CD4-positive, alpha-beta memory T cell (primary cell): ENCODE measurements at regions of chr9 and their contacts with region 1.

Region 1: DNA sequence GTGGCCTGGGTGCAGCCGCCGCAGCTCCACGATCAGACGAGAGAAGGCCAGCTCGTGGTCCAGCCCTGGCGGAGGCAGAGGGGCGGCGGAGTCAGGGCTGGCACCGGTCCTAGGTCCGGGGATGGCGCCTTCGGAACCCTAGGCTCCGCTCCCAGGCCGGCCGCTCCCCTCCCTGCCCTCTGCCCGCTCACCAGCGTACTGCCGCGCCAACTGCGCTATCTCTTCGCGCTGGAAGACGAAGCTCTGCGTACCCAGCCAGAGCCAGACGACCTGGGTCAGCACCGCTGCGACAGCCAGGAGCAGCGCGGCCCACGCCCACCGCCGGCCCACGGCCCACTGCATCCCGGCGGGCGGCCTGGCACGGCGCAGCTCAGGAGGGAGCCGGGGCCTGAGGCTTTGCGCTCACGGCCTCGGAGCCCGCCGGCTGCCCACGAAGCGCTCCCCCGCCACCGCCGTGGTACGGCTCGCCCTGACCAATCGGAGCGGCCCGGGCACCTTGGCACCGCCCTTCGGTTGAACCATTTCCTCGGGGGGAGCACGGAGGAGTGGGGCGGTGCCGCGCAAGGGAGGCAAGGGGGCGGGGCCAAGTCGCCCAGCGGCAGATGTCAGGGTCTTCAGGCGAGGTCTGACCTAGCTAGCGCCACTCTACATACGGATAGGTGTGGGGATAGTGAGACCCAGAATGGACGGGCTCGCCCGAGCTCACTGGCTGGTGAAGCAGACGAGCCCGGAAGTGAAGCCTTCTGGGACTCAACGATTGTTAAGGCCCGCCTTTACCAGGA is at the start of gene SIGMAR1:
- DNase-seq: peak; percentile 91 to 97 (median 94)
- H3K4me3 ChIP-seq: peak within 1 kb of the TSS; percentile 74 to 84
- H3K4me3 Mint-ChIP-seq: peak within 1 kb of the TSS; percentile 87 to 92 (median 91)
- H3K27ac ChIP-seq: peak within 1 kb of the TSS; percentile 78
- H3K27ac Mint-ChIP-seq: peak within 1 kb of the TSS; percentile 93 to 97 (median 95)
- H3K4me1 ChIP-seq: peaks cover 38% of the 10 kb centered on the region
- H3K4me1 Mint-ChIP-seq: peaks cover 22 to 51% (median 34%) of the 10 kb centered on the region in 4 donors
- H3K27me3 ChIP-seq: no peaks in the 10 kb centered on the region
- H3K27me3 Mint-ChIP-seq: no peaks in the 10 kb centered on the region
- total RNA-seq, gene SIGMAR1: 56.1 to 59.5 TPM

Region 2: GRCh38 chr9:34376596-34377403 is 260.7 kb before region 1 on chr9 and contains the start of gene MYORG:
- CTCF ChIA-PET with region 1: interaction called, 3 read pairs
- POLR2A ChIA-PET with region 1: interaction called, 3 read pairs
- intact Hi-C with region 1: loop called (anchors 5 kb)
- DNase-seq: peak; percentile 94 to 98 (median 96)
- H3K4me3 ChIP-seq: peak within 1 kb of the TSS; percentile 70 to 77
- H3K4me3 Mint-ChIP-seq: peak within 1 kb of the TSS; percentile 92 to 98 (median 94)
- H3K27ac ChIP-seq: peak within 1 kb of the TSS; percentile 49
- H3K27ac Mint-ChIP-seq: peak within 1 kb of the TSS; percentile 58 to 97 (median 93)
- H3K4me1 ChIP-seq: peaks cover 39% of the 10 kb centered on the region
- H3K4me1 Mint-ChIP-seq: peaks cover 33 to 54% (median 44%) of the 10 kb centered on the region in 4 donors
- H3K27me3 ChIP-seq: no peaks in the 10 kb centered on the region
- H3K27me3 Mint-ChIP-seq: no peaks in the 10 kb centered on the region
- total RNA-seq, gene MYORG: 1.3 to 1.4 TPM

Region 3: GRCh38 chr9:34458013-34458958 is 179.3 kb before region 1 on chr9 and contains the starts of genes DNAI1 and FAM219A:
- CTCF ChIA-PET with region 1: interaction called, 4 read pairs
- POLR2A ChIA-PET with region 1: interaction called, 8 read pairs
- intact Hi-C with region 1: loop called (anchors 1 kb)
- DNase-seq: peak; percentile 98 to 100 (median 99)
- H3K4me3 ChIP-seq: peak within 1 kb of the TSS; percentile 44 to 61
- H3K4me3 Mint-ChIP-seq: peak within 1 kb of the TSS; percentile 90 to 95 (median 92)
- H3K27ac ChIP-seq: peak within 1 kb of the TSS; percentile 5
- H3K27ac Mint-ChIP-seq: peak within 1 kb of the TSS; percentile 49 to 90 (median 88)
- H3K4me1 ChIP-seq: peaks cover 19% of the 10 kb centered on the region
- H3K4me1 Mint-ChIP-seq: peaks cover 18 to 30% (median 24%) of the 10 kb centered on the region in 4 donors
- H3K27me3 ChIP-seq: no peaks in the 10 kb centered on the region
- H3K27me3 Mint-ChIP-seq: no peaks in the 10 kb centered on the region
- total RNA-seq, gene DNAI1: not detected
- total RNA-seq, gene FAM219A: 13.9 to 16.3 TPM

Region 4: DNA sequence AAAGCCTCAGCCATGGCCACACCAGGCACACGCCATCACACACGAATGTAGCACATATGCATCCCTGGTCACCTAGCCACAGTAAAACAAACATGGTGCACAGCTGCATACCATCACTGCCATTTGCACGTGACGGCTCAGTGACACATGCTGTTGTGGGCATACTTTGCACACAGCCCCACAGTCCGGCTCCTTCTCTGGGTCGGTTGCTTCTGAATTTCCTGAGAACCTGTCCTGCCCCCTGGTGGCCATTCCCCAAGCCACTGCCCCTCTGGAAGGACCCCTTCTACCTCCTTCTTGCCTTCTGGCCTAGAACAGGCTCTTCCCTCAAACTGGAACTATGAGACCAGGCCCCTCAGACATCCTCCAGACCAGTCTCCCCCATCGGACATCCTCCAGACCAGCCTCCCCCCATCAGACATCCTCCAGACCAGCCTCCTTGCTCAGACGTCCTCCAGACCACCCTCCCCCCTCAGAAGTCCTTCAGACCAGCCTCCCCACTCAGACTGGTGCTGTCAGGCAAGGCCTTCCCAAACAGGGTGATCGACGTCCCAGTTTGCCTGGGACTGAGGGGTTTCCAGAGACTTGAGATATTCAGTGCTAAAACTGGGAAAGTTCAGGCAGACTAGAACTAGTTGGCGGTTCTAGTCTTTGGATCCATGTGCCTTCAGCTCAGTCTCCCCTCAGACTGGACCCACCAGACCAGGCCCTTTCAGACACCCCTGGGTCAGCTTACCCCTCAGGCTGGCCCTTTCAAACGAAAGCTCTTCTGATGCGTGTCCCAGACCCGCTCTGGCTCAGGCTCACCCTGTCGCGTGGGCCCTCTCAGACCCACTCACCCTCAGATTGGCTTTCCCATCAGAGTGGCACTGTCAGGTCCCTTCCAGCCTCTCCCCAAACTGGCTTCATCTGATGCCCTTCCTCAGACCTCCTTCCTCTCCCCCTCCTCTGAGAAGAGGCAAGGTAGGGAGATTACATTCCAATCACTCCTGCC is 90.4 kb before region 1 on chr9:
- CTCF ChIA-PET with region 1: interaction called, 7 read pairs
- POLR2A ChIA-PET with region 1: no interaction called
- intact Hi-C with region 1: loop called (anchors 1 kb)
- DNase-seq: peak in 4 of 5 donors; percentile 12 to 19 (median 17)
- H3K4me3 ChIP-seq: no peak overlapping the region
- H3K4me3 Mint-ChIP-seq: no peak overlapping the region
- H3K27ac ChIP-seq: no peak overlapping the region
- H3K27ac Mint-ChIP-seq: no peak overlapping the region
- H3K4me1 ChIP-seq: no peaks in the 10 kb centered on the region
- H3K4me1 Mint-ChIP-seq: no peaks in the 10 kb centered on the region
- H3K27me3 ChIP-seq: no peaks in the 10 kb centered on the region
- H3K27me3 Mint-ChIP-seq: peaks cover 15% of the 10 kb centered on the region in 2 donors

Region 5: GRCh38 chr9:34611829-34612630 is 25.5 kb before region 1 on chr9 and contains the start of gene RPP25L:
- CTCF ChIA-PET with region 1: interaction called, 235 read pairs
- POLR2A ChIA-PET with region 1: interaction called, 106 read pairs
- intact Hi-C with region 1: loop called (anchors 1 kb)
- DNase-seq: peak; percentile 83 to 89 (median 86)
- H3K4me3 ChIP-seq: peak within 1 kb of the TSS; percentile 81 to 88
- H3K4me3 Mint-ChIP-seq: peak within 1 kb of the TSS; percentile 87 to 99 (median 92)
- H3K27ac ChIP-seq: peak within 1 kb of the TSS; percentile 71
- H3K27ac Mint-ChIP-seq: peak within 1 kb of the TSS; percentile 83 to 97 (median 96)
- H3K4me1 ChIP-seq: peaks cover 19% of the 10 kb centered on the region
- H3K4me1 Mint-ChIP-seq: peaks cover 7 to 35% (median 25%) of the 10 kb centered on the region in 4 donors
- H3K27me3 ChIP-seq: no peaks in the 10 kb centered on the region
- H3K27me3 Mint-ChIP-seq: no peaks in the 10 kb centered on the region
- total RNA-seq, gene RPP25L: 28.5 to 28.9 TPM

Region 6: DNA sequence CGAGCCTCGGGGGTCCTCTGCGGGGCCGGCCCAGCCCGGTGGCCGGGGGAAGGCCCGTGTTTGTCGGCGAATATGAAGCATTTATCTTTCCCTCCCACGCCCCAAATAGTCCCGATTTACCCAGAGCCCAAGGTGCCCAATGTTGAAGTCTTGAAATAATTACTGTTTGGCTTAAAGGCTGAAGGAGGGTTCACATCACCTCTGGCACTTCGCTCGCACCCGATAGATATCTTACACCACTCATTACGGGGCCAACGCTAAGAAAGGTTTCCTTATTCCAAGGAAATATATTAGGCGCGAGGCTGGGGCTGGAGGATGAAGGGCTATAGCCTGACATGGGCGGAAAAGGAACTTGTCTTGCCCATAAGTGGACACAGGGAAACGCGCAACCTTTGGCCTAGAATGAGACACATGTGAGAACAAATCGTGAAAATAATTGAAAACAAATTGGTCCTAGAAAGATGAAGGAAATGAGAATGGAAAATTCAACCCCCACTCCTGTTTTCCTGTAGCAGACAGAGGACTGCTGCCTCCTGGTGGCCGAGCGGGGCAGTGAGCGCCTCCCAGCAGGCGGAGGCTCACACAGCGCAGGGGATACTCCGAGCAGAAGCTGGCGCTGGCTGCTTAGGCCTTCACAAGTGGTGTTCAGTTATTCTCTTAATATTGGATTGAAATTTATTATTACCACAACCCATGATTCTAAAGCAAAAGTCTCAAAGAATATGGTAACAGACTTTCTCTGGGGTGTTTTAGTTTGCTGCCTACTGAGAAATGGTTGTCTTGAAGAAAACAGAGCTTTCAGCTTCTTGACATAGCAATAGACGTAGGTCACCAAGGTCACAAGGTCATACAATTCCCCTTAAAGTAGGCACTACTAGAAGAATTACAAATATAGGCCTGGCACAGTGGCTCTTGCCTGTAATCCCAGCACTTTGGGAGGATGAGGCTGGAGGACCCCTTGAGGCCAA is 64.5 kb after region 1 on chr9:
- CTCF ChIA-PET with region 1: interaction called, 46 read pairs
- POLR2A ChIA-PET with region 1: interaction called, 11 read pairs
- intact Hi-C with region 1: loop called (anchors 2 kb)
- DNase-seq: peak; percentile 71 to 74 (median 72)
- H3K4me3 ChIP-seq: peak overlapping the region; percentile 54 to 93
- H3K4me3 Mint-ChIP-seq: peak overlapping the region; percentile 81 to 88 (median 86)
- H3K27ac ChIP-seq: no peak overlapping the region
- H3K27ac Mint-ChIP-seq: peak overlapping the region in 6 of 7 donors; percentile 37 to 70 (median 50)
- H3K4me1 ChIP-seq: peaks cover 7% of the 10 kb centered on the region
- H3K4me1 Mint-ChIP-seq: peaks cover 1 to 9% (median 6%) of the 10 kb centered on the region in 4 donors
- H3K27me3 ChIP-seq: no peaks in the 10 kb centered on the region
- H3K27me3 Mint-ChIP-seq: no peaks in the 10 kb centered on the region